Psoas muscle (tissue), 8 donors: ENCODE measurements at regions of chr2 and their contacts with region 1.

Region 1: GRCh38 chr2:234550511-234551107 is 53.7 kb upstream of the ARL4C start:
- DNase-seq: peak; percentile 59 to 73
- ATAC-seq: peak; percentile 63 to 86 (median 73)
- H3K4me3 ChIP-seq: no peak overlapping the region
- H3K27ac ChIP-seq: no peak overlapping the region
- H3K4me1 ChIP-seq: no peaks in the 10 kb centered on the region
- H3K27me3 ChIP-seq: peaks cover 0 to 23% (median 0%) of the 10 kb centered on the region in 3 donors
- CTCF ChIP-seq: peak; percentile 93

Region 2: DNA sequence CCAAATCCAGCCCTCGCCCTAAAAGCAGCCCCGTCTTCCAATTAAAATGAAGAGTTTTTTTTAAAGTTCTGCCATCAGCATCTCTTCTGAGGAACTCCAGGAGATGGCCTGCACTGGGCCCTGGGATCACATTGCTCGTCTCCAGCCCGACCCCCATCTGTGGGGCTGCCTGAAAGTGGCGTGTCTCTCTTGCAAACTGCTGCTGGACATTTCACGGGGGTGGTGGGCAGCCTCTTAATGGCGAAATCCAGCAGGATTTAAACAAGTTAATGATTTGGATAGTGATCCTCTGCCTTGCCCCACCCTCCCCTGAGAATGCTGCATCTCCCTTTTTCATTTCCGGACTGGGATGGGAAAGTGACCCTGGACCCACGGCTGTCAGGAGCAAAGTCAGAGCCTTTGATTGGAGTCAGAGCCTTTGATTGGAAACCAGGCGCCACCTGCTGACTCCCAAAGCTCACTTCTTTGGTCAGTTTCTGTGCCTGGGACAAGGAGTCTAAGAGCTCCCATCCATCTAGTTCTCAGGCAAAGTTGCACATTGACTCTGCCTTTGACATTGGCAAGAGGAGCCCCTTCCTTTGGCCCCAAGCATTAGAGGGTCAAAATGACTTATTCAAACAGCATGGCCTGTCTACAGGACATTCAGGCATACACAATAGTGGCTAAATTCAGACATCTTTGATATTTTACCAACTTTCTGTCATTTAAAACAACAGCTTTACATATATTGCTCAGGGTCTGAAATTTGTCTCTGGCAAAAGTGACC is 556.4 kb after region 1 on chr2:
- intact Hi-C with region 1: loop called in 1 of 2 experiments (anchors 5 kb)
- DNase-seq: peak; percentile 39 to 76
- ATAC-seq: peak in 3 of 4 donors; percentile 54 to 74 (median 62)
- H3K4me3 ChIP-seq: no peak overlapping the region
- H3K27ac ChIP-seq: no peak overlapping the region
- H3K4me1 ChIP-seq: peaks cover 3% of the 10 kb centered on the region
- H3K27me3 ChIP-seq: no peaks in the 10 kb centered on the region
- CTCF ChIP-seq: peak; percentile 57

Region 3: GRCh38 chr2:235116885-235117492 is 566.4 kb after region 1 on chr2:
- intact Hi-C with region 1: loop called in 1 of 2 experiments (anchors 5 kb)
- DNase-seq: no peak
- ATAC-seq: no peak
- H3K4me3 ChIP-seq: no peak overlapping the region
- H3K27ac ChIP-seq: no peak overlapping the region
- H3K4me1 ChIP-seq: no peaks in the 10 kb centered on the region
- H3K27me3 ChIP-seq: no peaks in the 10 kb centered on the region
- CTCF ChIP-seq: peak; percentile 66